Caco-2 (cell line): ENCODE measurements at regions of chr11 and their contacts with region 1.

Region 1: DNA sequence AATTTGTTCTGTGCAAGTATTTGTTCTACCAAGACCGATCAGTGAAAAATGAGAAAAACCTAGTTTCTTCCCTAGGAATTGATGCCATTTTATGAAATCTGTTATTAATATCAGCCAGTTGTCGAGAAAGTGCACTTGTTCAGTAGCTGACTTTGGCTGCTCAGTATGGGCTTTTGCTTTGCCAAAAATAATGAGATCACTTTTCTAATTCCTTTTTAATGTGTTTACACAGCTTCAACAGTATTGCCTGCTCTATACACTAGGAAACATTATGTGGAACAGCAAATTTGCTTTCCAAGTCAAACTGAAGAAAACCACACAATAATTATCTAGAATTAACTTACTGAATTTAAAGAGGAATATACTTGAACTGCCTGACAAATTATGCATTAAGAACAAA is 34.4 kb downstream of the SCUBE2 start:
- DNase-seq: no peak
- H3K4me3 ChIP-seq: no peak overlapping the region
- H3K4me3 Mint-ChIP-seq: no peak overlapping the region
- H3K27ac Mint-ChIP-seq: no peak overlapping the region
- H3K4me1 ChIP-seq: peaks cover 26% of the 10 kb centered on the region
- H3K4me1 Mint-ChIP-seq: peaks cover 17% of the 10 kb centered on the region
- H3K27me3 ChIP-seq: no peaks in the 10 kb centered on the region
- H3K27me3 Mint-ChIP-seq: no peaks in the 10 kb centered on the region
- CTCF ChIP-seq: no peak

Region 2: GRCh38 chr11:9078113-9079086 is 21.4 kb after region 1 on chr11:
- CTCF ChIA-PET with region 1: no interaction called
- POLR2A ChIA-PET with region 1: no interaction called
- intact Hi-C with region 1: no loop called
- DNase-seq: no peak
- H3K4me3 ChIP-seq: no peak overlapping the region
- H3K4me3 Mint-ChIP-seq: no peak overlapping the region
- H3K27ac Mint-ChIP-seq: no peak overlapping the region
- H3K4me1 ChIP-seq: peaks cover 21% of the 10 kb centered on the region
- H3K4me1 Mint-ChIP-seq: peaks cover 6% of the 10 kb centered on the region
- H3K27me3 ChIP-seq: no peaks in the 10 kb centered on the region
- H3K27me3 Mint-ChIP-seq: no peaks in the 10 kb centered on the region
- CTCF ChIP-seq: peak in 1 of 2 experiments; percentile 10

Region 3: DNA sequence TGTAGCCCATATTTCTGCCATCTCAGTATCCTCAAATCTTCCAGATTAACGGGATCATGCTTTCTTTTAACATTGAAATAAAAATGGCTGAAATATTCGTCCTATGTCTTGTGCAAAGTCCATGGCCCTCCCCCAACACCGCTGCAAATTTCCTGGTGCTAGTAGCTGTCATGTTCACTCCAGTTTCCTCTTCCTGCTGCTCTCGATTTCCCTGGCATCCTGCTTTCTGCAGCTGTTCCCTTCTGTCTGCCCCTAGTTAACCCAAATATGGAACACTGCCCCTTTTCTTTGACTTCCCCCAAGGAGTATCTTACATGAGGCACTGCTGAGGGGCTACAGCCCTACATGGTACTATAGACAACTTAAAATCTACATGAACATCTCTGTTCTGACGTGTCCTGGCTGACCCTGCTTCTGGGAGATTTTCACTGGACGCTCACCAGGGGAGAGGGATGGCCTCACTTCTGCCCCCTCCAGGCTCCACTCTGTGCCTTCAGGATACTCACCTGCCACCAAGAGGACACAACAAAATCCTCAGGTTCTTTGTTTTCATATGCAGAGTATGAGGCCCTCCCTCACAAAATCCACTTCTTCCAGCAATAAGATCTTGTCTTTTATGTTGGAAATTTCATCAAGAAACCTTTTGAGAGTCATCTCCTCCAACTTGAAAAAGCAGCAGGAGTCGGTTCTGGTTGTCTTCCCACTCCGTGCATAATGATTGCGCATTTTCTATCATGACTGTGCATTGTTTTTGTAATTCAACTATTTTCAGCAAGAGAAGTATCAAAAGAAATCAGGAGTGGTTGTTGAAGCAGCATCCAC is 63.9 kb after region 1 on chr11:
- CTCF ChIA-PET with region 1: no interaction called
- POLR2A ChIA-PET with region 1: no interaction called
- intact Hi-C with region 1: no loop called
- DNase-seq: peak in 1 of 2 experiments; percentile 56
- H3K4me3 ChIP-seq: no peak overlapping the region
- H3K4me3 Mint-ChIP-seq: no peak overlapping the region
- H3K27ac Mint-ChIP-seq: no peak overlapping the region
- H3K4me1 ChIP-seq: no peaks in the 10 kb centered on the region
- H3K4me1 Mint-ChIP-seq: peaks cover 6% of the 10 kb centered on the region
- H3K27me3 ChIP-seq: no peaks in the 10 kb centered on the region
- H3K27me3 Mint-ChIP-seq: no peaks in the 10 kb centered on the region
- CTCF ChIP-seq: peak; percentile 40 to 76

Region 4: GRCh38 chr11:9137293-9138132 is 80.5 kb after region 1 on chr11:
- CTCF ChIA-PET with region 1: interaction called, 9 read pairs
- POLR2A ChIA-PET with region 1: no interaction called
- intact Hi-C with region 1: loop called (anchors 5 kb)
- DNase-seq: peak; percentile 77 to 85
- H3K4me3 ChIP-seq: no peak overlapping the region
- H3K4me3 Mint-ChIP-seq: no peak overlapping the region
- H3K27ac Mint-ChIP-seq: peak overlapping the region; percentile 62
- H3K4me1 ChIP-seq: no peaks in the 10 kb centered on the region
- H3K4me1 Mint-ChIP-seq: no peaks in the 10 kb centered on the region
- H3K27me3 ChIP-seq: no peaks in the 10 kb centered on the region
- H3K27me3 Mint-ChIP-seq: no peaks in the 10 kb centered on the region
- CTCF ChIP-seq: peak; percentile 95 to 99